ENCODE measurements at regions of chr17 and their contacts with region 1.

Region 1: DNA sequence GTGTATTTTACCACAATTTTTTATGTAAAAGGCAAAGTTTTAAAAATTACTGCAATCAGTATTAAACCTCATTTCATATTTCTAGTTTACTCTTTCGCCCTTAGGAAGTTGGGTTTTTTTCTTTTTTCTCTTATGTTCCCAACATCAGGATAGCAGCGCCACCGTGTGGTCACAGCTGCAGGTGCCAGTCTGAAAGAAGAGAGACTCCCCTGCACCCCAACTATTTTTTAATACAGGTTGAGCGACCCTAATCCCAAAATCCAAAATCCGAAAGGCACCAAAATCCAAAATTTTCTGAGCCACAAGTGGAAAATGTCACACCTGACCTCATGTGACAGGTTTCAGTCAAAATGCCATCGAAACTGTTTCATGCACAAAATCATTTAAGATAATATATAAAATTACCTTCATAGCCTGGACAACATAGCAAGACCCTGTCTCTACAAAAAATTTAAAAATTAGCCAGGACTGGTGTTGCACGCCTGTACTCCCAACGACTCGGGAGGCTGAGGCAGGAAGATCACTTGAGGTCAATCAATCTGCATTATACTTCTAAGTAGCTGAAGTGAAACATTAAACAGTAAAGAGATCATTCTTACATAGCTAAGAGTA is 21.8 kb upstream of the ASGR2 start:
- DNase-seq: peak; percentile 56 to 83 (median 72)
- H3K4me3 ChIP-seq: peak overlapping the region in 44 of 59 donors; percentile 6 to 52 (median 30)
- H3K27ac ChIP-seq: no peak overlapping the region
- H3K27me3 ChIP-seq: peaks cover 0 to 37% (median 3%) of the 10 kb centered on the region in 45 donors
- CTCF ChIP-seq: peak; percentile 83 to 98 (median 95)

Region 2: DNA sequence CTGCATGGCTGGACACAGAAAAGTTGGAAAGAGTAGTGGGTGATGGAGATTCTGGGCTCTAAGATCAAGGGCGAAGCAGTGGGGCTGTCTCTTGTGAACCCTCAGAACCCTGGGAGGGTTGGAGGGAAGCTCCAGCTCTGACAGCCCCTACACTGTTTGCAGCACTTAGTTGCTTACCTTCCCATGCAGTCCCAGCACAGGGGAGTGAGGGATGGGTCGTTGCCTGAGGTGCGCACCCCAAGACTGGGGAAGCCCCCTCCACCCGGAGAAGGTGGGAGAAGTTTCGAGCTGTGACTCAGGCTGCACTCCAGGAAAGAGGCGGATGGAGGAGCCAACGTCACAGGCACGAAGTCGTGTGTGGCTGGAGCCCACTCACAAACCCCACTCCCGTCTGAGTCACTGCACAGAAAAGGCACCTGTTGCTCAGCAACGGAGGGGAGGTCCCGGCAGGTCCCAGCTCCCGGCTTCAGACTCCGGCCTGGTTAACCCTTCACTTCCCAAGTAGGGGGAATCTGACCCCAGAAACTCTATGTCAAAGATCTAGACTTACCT is 761.5 kb before region 1 on chr17:
- intact Hi-C with region 1: no loop called
- DNase-seq: peak in 3 of 10 donors; percentile 25 to 71 (median 42)
- H3K4me3 ChIP-seq: no peak overlapping the region
- H3K27ac ChIP-seq: no peak overlapping the region
- H3K27me3 ChIP-seq: peaks cover 0 to 31% (median 6%) of the 10 kb centered on the region in 45 donors
- CTCF ChIP-seq: no peak

Region 3: DNA sequence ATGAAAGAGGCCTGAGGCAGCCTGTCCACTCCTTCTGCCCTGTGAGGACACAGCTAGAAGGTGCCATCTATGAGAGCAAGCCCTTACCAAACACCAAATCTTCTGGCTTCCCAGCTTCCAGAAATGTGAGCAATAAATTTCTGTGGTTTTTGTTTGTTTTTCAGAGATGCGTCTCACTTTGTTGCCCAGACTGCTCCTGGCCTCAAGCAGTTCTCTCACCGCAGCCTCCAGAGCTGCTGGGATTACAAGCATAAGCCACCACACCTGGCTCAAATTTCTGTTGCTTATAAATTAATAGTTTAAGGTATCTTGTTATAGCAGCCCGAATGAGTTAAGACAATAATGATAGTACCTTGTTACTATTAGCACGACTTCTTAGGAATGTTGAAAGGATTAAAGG is 80.0 kb before region 1 on chr17:
- intact Hi-C with region 1: loop called (anchors 2 kb)
- DNase-seq: no peak
- H3K4me3 ChIP-seq: no peak overlapping the region
- H3K27ac ChIP-seq: no peak overlapping the region
- H3K27me3 ChIP-seq: peaks cover 0 to 5% (median 0%) of the 10 kb centered on the region in 45 donors
- CTCF ChIP-seq: no peak

Region 4: GRCh38 chr17:7177196-7177953 is 41.0 kb after region 1 on chr17:
- intact Hi-C with region 1: loop called in 1 of 2 experiments (anchors 2 kb)
- DNase-seq: peak; percentile 42 to 84 (median 79)
- H3K4me3 ChIP-seq: peak overlapping the region; percentile 14 to 71 (median 53)
- H3K27ac ChIP-seq: peak overlapping the region in 35 of 59 donors; percentile 18 to 86 (median 59)
- H3K27me3 ChIP-seq: peaks cover 0 to 5% (median 0%) of the 10 kb centered on the region in 45 donors
- CTCF ChIP-seq: peak; percentile 58 to 88 (median 81)